PC-3 (cell line): ENCODE measurements at regions of chr17 and their contacts with region 1.

Region 1: GRCh38 chr17:70095455-70095854 is 20.4 kb downstream of the KCNJ16 start:
- DNase-seq: no peak
- ATAC-seq: no peak
- H3K4me3 ChIP-seq: no peak overlapping the region
- H3K27ac ChIP-seq: no peak overlapping the region
- H3K4me1 ChIP-seq: peaks cover 11% of the 10 kb centered on the region
- H3K27me3 ChIP-seq: no peaks in the 10 kb centered on the region
- CTCF ChIP-seq: no peak

Region 2: GRCh38 chr17:69597898-69598692 is 497.4 kb before region 1 on chr17:
- CTCF ChIA-PET with region 1: interaction called, 12 read pairs
- POLR2A ChIA-PET with region 1: no interaction called
- intact Hi-C with region 1: no loop called
- DNase-seq: peak; percentile 82
- ATAC-seq: peak; percentile 97
- H3K4me3 ChIP-seq: no peak overlapping the region
- H3K27ac ChIP-seq: peak overlapping the region; percentile 16; the same call in 1 of the 2 replicates
- H3K4me1 ChIP-seq: peaks cover 12% of the 10 kb centered on the region
- H3K27me3 ChIP-seq: no peaks in the 10 kb centered on the region
- CTCF ChIP-seq: no peak

Region 3: DNA sequence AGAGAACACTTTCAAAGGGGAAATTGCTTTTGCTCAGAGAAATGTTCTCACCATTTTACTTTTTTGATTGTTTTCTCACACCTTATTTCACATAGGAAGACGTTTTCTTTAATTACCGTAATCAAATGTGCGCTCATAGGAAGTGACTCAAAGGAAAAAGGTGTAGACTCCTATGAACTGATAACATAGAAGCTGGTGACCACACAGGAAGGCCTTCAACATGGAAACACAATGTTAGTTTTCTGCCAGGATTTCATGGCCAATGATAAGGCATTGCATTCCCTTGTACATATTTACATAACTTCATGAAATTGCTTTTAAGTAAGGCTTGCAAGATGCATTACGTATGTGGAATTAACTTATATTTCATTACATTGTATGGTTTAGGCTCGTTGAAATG is 61.3 kb before region 1 on chr17:
- CTCF ChIA-PET with region 1: no interaction called
- POLR2A ChIA-PET with region 1: interaction called, 14 read pairs
- intact Hi-C with region 1: no loop called
- DNase-seq: no peak
- ATAC-seq: no peak
- H3K4me3 ChIP-seq: no peak overlapping the region
- H3K27ac ChIP-seq: no peak overlapping the region
- H3K4me1 ChIP-seq: no peaks in the 10 kb centered on the region
- H3K27me3 ChIP-seq: no peaks in the 10 kb centered on the region
- CTCF ChIP-seq: no peak

Region 4: DNA sequence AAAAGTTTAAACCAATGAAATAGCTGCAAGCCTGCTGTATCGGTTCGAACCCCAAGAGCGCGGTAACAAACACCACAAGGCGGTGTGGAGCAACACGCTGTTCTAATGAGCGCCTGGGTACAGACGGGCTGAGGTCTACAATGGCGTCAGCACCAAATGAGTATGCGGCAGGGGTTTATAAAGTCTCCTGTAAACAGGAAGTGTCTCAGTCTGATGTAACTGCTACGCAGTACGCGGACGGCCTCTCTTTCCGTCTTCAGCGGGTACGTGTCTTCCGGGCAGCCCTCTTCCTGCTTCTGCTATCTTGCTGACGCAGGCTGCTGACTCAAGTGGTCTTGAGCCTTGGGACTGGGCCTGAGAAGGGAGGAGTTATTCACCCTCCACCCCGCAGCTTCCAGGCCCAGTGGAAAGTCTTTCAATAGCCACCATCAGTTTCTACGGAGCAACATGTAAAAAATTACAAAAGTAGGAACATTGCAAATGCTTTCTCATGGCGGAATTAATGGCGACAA is 33.3 kb after region 1 on chr17:
- CTCF ChIA-PET with region 1: no interaction called
- POLR2A ChIA-PET with region 1: no interaction called
- intact Hi-C with region 1: no loop called
- DNase-seq: no peak
- ATAC-seq: no peak
- H3K4me3 ChIP-seq: no peak overlapping the region
- H3K27ac ChIP-seq: no peak overlapping the region
- H3K4me1 ChIP-seq: 0 out of 2 replicates have a peak, but pooled peaks cover 7% of the 10 kb centered on the region
- H3K27me3 ChIP-seq: no peaks in the 10 kb centered on the region
- CTCF ChIP-seq: no peak

Region 5: DNA sequence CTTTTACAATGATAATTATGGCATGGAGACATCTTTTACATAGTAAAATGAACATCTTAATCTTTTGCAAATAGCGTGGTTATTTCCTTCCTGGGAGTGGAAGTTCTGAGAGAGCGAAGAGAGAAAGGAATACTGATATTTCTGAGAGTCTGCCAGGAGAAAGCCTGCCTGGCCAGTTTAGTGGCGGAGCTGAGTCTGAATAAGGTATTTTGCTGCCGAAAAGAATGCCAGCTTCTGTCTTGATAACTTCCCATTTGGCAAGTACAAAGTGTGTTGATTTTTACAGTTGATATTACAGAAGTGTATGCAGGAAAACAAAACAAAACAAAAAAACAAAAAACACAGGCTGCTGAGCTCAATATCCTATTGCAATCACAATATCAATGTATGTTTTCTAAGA is 129.8 kb after region 1 on chr17:
- CTCF ChIA-PET with region 1: no interaction called
- POLR2A ChIA-PET with region 1: no interaction called
- intact Hi-C with region 1: no loop called
- DNase-seq: peak; percentile 28
- ATAC-seq: no peak
- H3K4me3 ChIP-seq: no peak overlapping the region
- H3K27ac ChIP-seq: no peak overlapping the region
- H3K4me1 ChIP-seq: no peaks in the 10 kb centered on the region
- H3K27me3 ChIP-seq: peaks cover 19% of the 10 kb centered on the region; the same call in 1 of the 2 replicates
- CTCF ChIP-seq: no peak

Region 6: GRCh38 chr17:70320673-70321345 is 225.4 kb after region 1 on chr17:
- CTCF ChIA-PET with region 1: no interaction called
- POLR2A ChIA-PET with region 1: no interaction called
- intact Hi-C with region 1: no loop called
- DNase-seq: no peak
- ATAC-seq: no peak
- H3K4me3 ChIP-seq: no peak overlapping the region
- H3K27ac ChIP-seq: no peak overlapping the region
- H3K4me1 ChIP-seq: no peaks in the 10 kb centered on the region
- H3K27me3 ChIP-seq: no peaks in the 10 kb centered on the region
- CTCF ChIP-seq: no peak